SK-N-SH (cell line): ENCODE measurements at regions of chr1 and their contacts with region 1.

Region 1: DNA sequence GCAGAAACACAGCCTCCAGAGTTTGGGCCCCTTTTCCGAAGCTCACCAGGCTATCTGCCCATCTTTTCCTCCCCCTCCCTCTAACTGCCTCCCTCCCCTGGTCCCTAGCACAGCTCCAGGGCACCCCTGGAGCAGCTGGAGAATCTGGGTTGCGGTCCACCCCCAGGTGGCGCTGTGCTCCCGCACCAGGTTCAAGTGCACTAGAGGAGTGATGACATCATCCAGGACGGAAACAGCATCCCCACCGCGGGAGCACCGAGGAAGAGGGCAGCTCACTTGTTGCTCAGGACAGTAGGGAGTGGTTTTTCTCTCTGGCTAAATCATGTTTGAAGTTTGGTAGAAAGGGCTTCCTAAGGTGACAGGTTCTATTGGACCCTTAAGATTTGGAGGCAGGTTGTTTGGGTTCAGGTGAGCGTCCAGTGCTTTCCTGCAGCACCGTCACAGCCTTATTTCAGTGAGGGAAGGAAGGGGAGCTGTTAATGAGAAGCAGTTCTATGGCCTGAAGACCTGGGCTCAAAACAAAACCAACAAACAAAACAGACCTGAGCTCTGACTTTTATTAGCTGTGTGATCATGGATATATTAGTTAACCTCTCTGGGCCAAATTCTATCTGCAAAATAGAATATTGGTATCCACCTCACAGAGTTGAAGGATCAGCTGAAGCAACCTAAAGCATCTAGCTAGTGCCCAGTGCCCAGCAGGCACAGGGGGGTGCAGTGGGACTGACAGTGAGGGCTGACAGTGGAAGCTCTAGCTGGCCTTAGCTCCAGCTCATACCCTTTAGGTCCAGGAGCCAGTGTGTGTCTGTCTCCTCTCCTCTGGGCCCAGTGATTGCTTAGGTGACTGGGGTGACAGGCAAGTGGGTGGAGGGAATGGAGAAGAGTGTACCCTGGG is 7.5 kb downstream of the SHISA4 start:
- DNase-seq: peak; percentile 92
- H3K4me3 ChIP-seq: peak overlapping the region; percentile 10 to 15; a peak in 2 of 4 replicates
- H3K27ac ChIP-seq: peak overlapping the region in 1 of 2 experiments; percentile 42; a peak in 1 of 4 replicates
- H3K4me1 ChIP-seq: peaks cover 6 to 15% of the 10 kb centered on the region in 2 experiments; a peak in 2 of 4 replicates
- H3K27me3 ChIP-seq: no peaks in the 10 kb centered on the region
- CTCF ChIP-seq: peak; percentile 97
- EP300 ChIP-seq: no peak
- RAD21 ChIP-seq: peak; percentile 95

Region 2: GRCh38 chr1:201877877-201878401 is 18.2 kb before region 1 on chr1:
- CTCF ChIA-PET with region 1: interaction called, 222 read pairs
- POLR2A ChIA-PET with region 1: interaction called, 5 read pairs
- DNase-seq: peak; percentile 46
- H3K4me3 ChIP-seq: peak overlapping the region in 1 of 2 experiments; percentile 24; a peak in 1 of 4 replicates
- H3K27ac ChIP-seq: no peak overlapping the region
- H3K4me1 ChIP-seq: peaks cover 3 to 8% of the 10 kb centered on the region in 2 experiments; a peak in 3 of 4 replicates
- H3K27me3 ChIP-seq: no peaks in the 10 kb centered on the region
- CTCF ChIP-seq: peak; percentile 73
- EP300 ChIP-seq: no peak
- RAD21 ChIP-seq: peak; percentile 67

Region 3: GRCh38 chr1:201937624-201938213 is 41.6 kb after region 1 on chr1:
- CTCF ChIA-PET with region 1: interaction called, 20 read pairs
- POLR2A ChIA-PET with region 1: no interaction called
- DNase-seq: no peak
- H3K4me3 ChIP-seq: no peak overlapping the region
- H3K27ac ChIP-seq: peak overlapping the region in 1 of 2 experiments; percentile 52; a peak in 2 of 4 replicates
- H3K4me1 ChIP-seq: no peaks in the 10 kb centered on the region; a peak in 1 of 4 replicates
- H3K27me3 ChIP-seq: no peaks in the 10 kb centered on the region
- CTCF ChIP-seq: no peak
- EP300 ChIP-seq: no peak
- RAD21 ChIP-seq: no peak

Region 4: GRCh38 chr1:201964261-201964660 is 68.1 kb after region 1 on chr1:
- CTCF ChIA-PET with region 1: interaction called, 344 read pairs
- POLR2A ChIA-PET with region 1: no interaction called
- DNase-seq: no peak
- H3K4me3 ChIP-seq: no peak overlapping the region
- H3K27ac ChIP-seq: no peak overlapping the region
- H3K4me1 ChIP-seq: no peaks in the 10 kb centered on the region
- H3K27me3 ChIP-seq: no peaks in the 10 kb centered on the region
- CTCF ChIP-seq: no peak
- EP300 ChIP-seq: no peak
- RAD21 ChIP-seq: no peak

Region 5: DNA sequence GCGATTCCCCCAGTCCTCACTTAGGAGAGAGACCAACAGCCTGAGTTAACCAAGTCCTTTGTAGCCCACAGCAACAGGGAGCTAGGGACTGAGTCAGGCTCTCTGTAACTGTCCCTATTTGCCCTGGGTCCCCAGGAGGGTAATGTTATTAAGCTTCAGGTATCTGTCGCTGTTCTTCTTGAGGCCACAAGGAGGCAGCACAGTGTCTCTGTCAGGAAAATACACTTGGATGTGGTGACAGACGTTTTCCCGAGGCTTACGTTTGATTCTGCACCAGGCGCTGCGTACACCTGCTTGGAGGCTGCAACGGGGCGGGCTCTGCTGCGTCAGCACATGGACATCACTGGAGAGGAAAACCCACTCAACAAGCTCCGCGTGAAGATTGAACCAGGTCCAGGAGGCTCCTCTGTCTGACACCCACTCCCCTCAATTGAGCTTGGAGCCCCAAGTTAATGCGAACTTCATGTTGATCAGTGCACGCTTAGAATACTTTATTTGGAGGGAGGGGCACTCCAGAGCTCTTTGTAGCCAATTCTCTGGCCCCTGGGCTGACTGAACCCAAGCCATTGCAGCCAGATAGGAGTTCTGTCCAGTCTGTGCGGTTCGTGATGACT is 103.6 kb after region 1 on chr1:
- CTCF ChIA-PET with region 1: interaction called, 56 read pairs
- POLR2A ChIA-PET with region 1: no interaction called
- DNase-seq: peak; percentile 76
- H3K4me3 ChIP-seq: no peak overlapping the region; a peak in 1 of 4 replicates
- H3K27ac ChIP-seq: no peak overlapping the region
- H3K4me1 ChIP-seq: no peaks in the 10 kb centered on the region
- H3K27me3 ChIP-seq: no peaks in the 10 kb centered on the region
- CTCF ChIP-seq: peak; percentile 72
- EP300 ChIP-seq: no peak
- RAD21 ChIP-seq: peak; percentile 64

Region 6: GRCh38 chr1:202135221-202135721 is 239.1 kb after region 1 on chr1:
- CTCF ChIA-PET with region 1: interaction called, 10 read pairs
- POLR2A ChIA-PET with region 1: no interaction called
- DNase-seq: peak; percentile 93
- H3K4me3 ChIP-seq: no peak overlapping the region; a peak in 1 of 4 replicates
- H3K27ac ChIP-seq: no peak overlapping the region
- H3K4me1 ChIP-seq: peaks cover 0 to 4% of the 10 kb centered on the region in 2 experiments; a peak in 1 of 4 replicates
- H3K27me3 ChIP-seq: no peaks in the 10 kb centered on the region
- CTCF ChIP-seq: peak; percentile 81
- EP300 ChIP-seq: no peak
- RAD21 ChIP-seq: peak; percentile 76